ENCODE measurements at regions of chr5 and their contacts with region 1.

Region 1: DNA sequence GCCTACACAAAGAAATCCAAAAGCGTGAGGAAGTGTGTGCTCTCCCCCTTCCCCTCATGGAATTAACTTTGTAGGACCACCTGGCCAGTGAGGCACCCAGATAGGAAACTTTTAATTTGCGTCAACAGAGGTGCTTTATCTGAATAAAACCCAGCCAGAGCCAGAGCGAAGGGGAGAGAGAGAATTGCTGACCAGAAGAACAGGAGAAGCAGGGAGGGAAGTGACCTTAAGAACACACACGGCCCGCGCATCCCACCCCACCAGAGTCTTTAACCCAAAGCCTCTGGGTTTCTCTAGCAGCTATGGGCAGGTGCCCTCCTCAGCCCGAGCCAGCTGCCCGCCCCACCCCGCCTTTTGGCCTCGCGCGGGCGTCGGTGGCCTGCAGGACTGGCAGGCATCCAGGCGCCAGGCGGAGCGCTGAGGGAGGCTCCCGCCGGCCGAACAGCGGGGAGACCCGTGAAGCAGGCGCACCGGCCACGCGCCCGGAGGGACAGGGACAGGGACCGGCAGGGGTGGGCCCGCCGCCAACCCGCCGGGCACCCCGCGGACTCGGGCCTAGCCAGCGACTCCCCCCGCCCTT is 580 bp downstream of the ERAP1 start:
- DNase-seq: peak; percentile 55
- H3K4me3 ChIP-seq: peak overlapping the region; percentile 84
- H3K27ac ChIP-seq: peak overlapping the region; percentile 75
- H3K4me1 ChIP-seq: peaks cover 46% of the 10 kb centered on the region
- CTCF ChIP-seq: no peak

Region 2: GRCh38 chr5:96729156-96729555 is 78.0 kb before region 1 on chr5:
- CTCF ChIA-PET with region 1: no interaction called
- POLR2A ChIA-PET with region 1: no interaction called
- intact Hi-C with region 1: no loop called
- DNase-seq: no peak
- H3K4me3 ChIP-seq: no peak overlapping the region
- H3K27ac ChIP-seq: no peak overlapping the region
- H3K4me1 ChIP-seq: peaks cover 4% of the 10 kb centered on the region
- CTCF ChIP-seq: peak; percentile 72

Region 3: GRCh38 chr5:97142521-97143254 is 335.5 kb after region 1 on chr5 and contains the start of gene LIX1:
- CTCF ChIA-PET with region 1: no interaction called
- POLR2A ChIA-PET with region 1: interaction called, 8 read pairs
- intact Hi-C with region 1: loop called (anchors 1 kb)
- DNase-seq: peak; percentile 75
- H3K4me3 ChIP-seq: no peak within 1 kb of the TSS
- H3K27ac ChIP-seq: no peak within 1 kb of the TSS
- H3K4me1 ChIP-seq: peaks cover 5% of the 10 kb centered on the region
- CTCF ChIP-seq: peak; percentile 87
- total RNA-seq, gene LIX1: 0.18 and 0.44 TPM in 2 replicates